Activated T-helper 2 cell treated with anti-CD3 and anti-CD28 coated beads, Interferon-gamma antibody, Interleukin-2, Interleukin-4, amounts not matched to agents 10 μg/mL and 5 μg/mL and 100 μg/mL, durations not matched to agents 14 hours and 24 hours and 36 hours (primary cell): ENCODE measurements at regions of chr16 and their contacts with region 1.

Region 1: DNA sequence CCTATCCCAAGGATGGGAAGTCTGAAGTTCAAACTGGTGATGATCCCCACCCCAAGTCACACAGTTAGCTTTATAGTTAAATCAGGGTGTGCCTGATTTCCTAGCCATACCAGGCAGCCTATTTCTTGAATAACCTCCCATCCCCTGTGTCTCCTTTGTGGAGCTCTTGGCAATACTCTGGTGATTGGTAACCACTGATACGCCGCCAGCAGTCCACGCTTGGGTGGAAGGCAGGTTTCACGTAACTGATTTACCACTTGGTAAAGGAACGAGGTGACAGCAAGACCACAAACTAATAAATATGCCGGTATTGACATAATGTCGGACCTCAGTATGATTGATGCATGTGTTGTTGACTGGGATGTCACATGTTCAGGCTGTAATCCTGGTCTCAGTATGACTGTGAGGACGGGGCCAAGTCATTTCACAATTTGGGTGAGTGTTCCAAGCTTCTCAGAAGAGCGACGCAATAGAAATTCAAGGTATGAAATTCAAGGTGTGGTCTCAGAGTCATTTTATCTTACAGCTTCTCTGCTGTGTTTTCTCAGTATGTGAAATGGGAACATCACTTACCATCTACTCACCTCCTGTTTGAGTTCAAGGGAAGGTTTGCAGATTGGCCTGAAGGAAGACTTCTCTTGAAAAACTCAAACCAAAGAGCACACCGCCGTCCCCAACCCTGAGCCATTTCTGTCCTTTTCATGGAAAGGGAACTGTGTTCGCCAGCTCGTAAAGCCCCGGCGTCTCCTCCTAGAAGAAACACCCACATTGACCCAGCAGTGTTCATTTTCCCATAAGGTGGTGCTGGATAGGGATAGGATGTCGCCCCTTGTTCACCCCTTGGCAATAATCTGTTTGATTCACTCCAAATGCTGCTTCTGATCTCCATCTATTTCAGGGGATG is 678.9 kb downstream of the WWOX start:
- DNase-seq: peak; percentile 54
- H3K4me3 Mint-ChIP-seq: peak overlapping the region; percentile 58
- H3K27ac Mint-ChIP-seq: peak overlapping the region; percentile 91
- H3K4me1 Mint-ChIP-seq: peaks cover 61% of the 10 kb centered on the region
- H3K27me3 Mint-ChIP-seq: no peaks in the 10 kb centered on the region

Region 2: DNA sequence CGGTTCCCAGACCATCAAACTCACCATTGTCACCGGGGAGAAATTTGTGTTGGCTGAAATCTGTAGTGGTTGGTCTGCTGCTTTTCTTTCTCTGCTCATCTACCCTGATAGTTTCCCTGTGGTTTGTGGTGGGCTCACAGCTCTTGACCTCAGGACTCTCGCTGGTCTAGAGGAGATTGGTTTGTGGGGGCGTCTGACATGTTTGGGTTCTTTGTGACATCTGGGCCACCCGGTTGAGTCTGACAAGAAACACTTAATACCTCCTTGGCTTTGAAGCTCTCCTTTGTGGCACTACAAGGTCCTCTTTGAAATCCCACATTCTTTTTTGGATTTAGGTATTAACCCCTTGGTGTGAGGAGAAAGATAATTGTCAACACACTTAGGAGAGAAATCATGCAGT is 16.9 kb before region 1 on chr16:
- intact Hi-C with region 1: loop called (anchors 1 kb)
- DNase-seq: no peak
- H3K4me3 Mint-ChIP-seq: no peak overlapping the region
- H3K27ac Mint-ChIP-seq: no peak overlapping the region
- H3K4me1 Mint-ChIP-seq: peaks cover 4% of the 10 kb centered on the region
- H3K27me3 Mint-ChIP-seq: peaks cover 11% of the 10 kb centered on the region

Region 3: DNA sequence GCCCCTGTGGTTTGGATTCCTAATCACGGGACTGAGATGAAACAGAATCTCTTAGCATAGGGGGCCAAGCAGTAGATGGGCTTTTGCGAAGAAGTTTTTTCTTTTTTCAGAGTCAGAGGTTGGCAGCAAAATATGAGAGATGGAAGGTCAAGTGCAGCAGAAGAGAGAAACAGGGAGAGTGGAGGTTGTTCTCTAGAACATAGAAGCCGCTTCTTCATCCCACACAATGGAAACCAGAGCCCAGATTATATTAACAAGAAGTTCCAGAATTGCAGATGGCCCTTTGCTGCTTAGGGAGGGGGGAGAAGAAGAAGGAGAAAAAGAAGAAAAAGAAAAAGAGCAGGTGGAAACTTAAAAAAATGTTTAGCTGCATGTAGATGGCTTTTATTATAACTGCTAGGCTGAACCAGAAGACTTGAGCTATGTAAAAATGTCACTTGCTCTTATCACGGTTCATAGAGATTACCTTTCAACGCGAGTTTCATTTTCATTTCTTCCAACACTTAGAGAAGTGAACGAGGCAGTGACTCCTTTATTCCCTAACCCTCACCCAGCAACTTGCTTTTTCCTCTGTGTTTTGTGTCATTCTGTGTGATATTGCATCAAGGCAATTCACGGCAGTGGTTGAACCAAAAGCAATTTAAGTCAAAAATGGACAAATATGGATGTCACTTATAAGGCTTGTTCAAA is 58.6 kb after region 1 on chr16:
- intact Hi-C with region 1: loop called (anchors 1 kb)
- DNase-seq: no peak
- H3K4me3 Mint-ChIP-seq: peak overlapping the region; percentile 13
- H3K27ac Mint-ChIP-seq: peak overlapping the region; percentile 86
- H3K4me1 Mint-ChIP-seq: peaks cover 11% of the 10 kb centered on the region
- H3K27me3 Mint-ChIP-seq: no peaks in the 10 kb centered on the region

Region 4: DNA sequence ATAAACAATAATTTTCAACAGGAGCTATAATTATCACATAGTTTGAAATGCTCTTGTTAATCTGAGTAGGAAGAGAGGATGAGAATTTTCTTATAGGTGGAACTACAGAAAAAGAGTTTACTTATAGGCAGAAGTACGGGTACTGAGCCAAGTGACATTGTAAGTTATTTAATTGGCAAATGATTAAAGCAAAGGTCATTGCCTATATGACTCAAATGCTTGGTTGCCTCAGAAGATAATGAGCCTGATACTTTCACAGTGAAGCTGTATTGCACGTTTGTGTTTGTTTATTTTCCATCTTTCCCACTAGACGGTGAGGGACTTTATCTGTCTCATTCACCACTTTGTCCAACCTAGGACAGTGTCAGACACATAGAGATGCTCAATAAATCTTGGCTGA is 72.9 kb after region 1 on chr16:
- intact Hi-C with region 1: no loop called
- DNase-seq: no peak
- H3K4me3 Mint-ChIP-seq: no peak overlapping the region
- H3K27ac Mint-ChIP-seq: no peak overlapping the region
- H3K4me1 Mint-ChIP-seq: no peaks in the 10 kb centered on the region
- H3K27me3 Mint-ChIP-seq: no peaks in the 10 kb centered on the region

Region 5: GRCh38 chr16:78962457-78962929 is 184.1 kb after region 1 on chr16:
- intact Hi-C with region 1: loop called (anchors 1 kb)
- DNase-seq: no peak
- H3K4me3 Mint-ChIP-seq: no peak overlapping the region
- H3K27ac Mint-ChIP-seq: peak overlapping the region; percentile 6
- H3K4me1 Mint-ChIP-seq: peaks cover 12% of the 10 kb centered on the region
- H3K27me3 Mint-ChIP-seq: no peaks in the 10 kb centered on the region

Region 6: GRCh38 chr16:79269211-79269863 is 491.0 kb after region 1 on chr16:
- intact Hi-C with region 1: loop called (anchors 1 kb)
- DNase-seq: peak; percentile 68
- H3K4me3 Mint-ChIP-seq: peak overlapping the region; percentile 38
- H3K27ac Mint-ChIP-seq: peak overlapping the region; percentile 87
- H3K4me1 Mint-ChIP-seq: peaks cover 89% of the 10 kb centered on the region
- H3K27me3 Mint-ChIP-seq: no peaks in the 10 kb centered on the region